ENCODE measurements at regions of chr3 and their contacts with region 1.

Region 1: DNA sequence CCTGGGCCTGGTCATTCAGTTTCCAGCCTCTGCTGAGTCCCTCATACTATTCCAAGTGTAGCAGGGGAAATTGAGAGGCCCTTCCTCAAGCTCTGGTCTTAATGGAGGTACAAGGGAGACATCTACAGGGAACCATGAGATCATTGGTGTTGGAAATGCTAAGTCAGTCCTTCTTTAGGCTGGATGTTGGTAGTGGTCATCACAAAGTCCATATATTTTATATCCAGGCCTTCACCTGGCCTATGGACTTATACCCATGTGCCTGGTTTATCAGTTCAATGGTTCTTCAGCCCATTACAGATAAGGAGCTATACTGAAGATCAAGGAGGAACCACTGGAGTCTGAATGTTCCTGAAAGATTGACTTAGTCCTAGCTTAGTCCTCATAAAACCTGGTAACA is 135.0 kb downstream of the STAG1 start:
- DNase-seq: no peak
- H3K4me3 ChIP-seq: no peak overlapping the region
- H3K27ac ChIP-seq: no peak overlapping the region
- H3K4me1 ChIP-seq: peaks cover 23% of the 10 kb centered on the region
- H3K27me3 ChIP-seq: no peaks in the 10 kb centered on the region
- CTCF ChIP-seq: no peak

Region 2: DNA sequence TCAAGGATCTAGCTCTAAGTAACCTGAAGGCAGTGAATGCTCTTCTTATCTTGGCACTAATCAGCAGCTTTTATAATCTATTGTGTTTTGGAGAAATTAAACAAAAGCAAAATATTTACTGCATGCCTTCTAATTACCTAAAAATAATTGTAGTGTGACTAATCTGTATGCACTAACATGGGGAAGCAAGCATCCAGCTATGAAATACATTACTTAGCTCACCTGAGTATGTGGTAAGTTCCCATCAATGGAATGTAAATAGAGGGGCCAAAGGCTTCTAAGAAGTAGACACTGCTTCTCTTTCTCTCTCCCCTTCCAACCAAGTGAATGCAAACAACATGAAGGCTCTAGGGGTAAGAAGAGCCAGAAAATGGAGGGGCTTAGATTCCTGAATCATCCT is 30.6 kb before region 1 on chr3:
- CTCF ChIA-PET with region 1: no interaction called
- POLR2A ChIA-PET with region 1: interaction called, 15 read pairs
- intact Hi-C with region 1: no loop called
- DNase-seq: peak in 1 of 2 experiments; percentile 69
- H3K4me3 ChIP-seq: no peak overlapping the region
- H3K27ac ChIP-seq: no peak overlapping the region
- H3K4me1 ChIP-seq: 0 out of 2 replicates have a peak, but pooled peaks cover 9% of the 10 kb centered on the region
- H3K27me3 ChIP-seq: no peaks in the 10 kb centered on the region
- CTCF ChIP-seq: no peak

Region 3: DNA sequence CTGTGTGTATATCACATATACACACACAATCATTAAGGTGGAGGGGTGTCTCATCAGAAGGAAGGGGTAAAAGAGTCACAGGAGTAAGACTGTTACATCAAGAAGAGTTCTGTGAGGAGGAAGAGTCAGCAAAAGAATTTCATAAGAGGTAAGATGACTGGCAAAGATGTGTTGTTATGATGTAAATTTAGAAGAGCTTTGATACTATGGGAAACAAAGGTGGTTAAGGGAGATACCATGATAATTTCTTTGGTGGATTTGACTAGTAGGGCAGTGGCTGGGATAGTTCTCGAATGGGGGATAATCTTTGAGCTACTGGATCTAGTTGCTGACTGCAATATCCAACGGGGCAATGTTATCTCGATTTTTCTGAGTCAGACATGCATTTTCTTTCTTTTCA is 73.4 kb after region 1 on chr3:
- CTCF ChIA-PET with region 1: no interaction called
- POLR2A ChIA-PET with region 1: no interaction called
- intact Hi-C with region 1: no loop called
- DNase-seq: no peak
- H3K4me3 ChIP-seq: no peak overlapping the region
- H3K27ac ChIP-seq: no peak overlapping the region
- H3K4me1 ChIP-seq: no peaks in the 10 kb centered on the region
- H3K27me3 ChIP-seq: no peaks in the 10 kb centered on the region
- CTCF ChIP-seq: no peak